CD8-positive, alpha-beta memory T cell (primary cell): ENCODE measurements at regions of chr2 and their contacts with region 1.

Region 1: DNA sequence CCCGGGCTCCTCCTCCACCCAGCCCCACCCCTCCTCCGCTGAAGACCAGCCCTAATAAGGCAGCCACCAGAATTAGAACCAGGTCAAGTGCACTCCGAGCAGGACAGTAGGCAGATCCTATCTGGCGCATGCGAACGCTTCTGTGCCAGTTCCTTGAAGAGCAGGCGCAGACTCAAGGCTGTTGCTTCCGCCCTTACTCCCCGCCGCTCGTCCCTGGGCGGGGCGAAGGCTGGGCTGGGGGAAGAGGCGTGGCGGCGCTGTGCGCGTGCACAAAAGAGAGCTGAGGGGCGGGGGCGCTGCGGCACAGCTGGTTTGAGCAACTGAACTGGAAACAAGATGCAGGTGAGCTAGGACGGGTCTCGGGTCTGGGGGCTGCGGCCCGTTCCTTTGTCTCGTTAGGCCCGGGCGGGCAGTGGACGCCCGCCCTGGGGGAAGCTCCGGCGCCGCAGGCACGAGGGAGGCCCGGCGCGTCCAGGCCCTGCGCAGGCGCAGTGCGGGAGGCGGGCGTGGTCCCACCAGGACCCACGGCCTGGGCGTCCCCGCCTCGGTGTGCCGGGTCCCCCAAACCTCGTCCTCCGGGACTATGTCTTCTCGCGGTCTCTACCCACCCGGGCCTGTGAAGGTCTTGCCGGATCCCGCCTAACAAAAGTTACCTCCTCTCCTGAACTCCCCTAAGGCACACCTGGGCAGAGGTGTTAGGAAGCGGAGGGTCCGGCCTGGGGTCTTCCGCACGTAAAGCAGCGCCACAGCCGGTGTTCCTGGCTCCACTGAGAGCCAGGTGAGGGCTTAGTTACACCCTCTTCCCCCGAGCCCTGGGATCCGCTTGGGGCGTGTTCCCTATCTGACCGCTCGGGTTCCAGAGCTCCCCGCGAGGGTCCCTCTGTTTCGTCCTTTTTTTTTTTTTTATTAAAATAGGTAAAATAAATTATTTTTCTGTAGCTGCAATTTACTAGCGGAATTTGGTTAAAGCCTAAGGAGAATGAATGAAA is at the start of gene PDCL3:
- DNase-seq: peak; percentile 91 to 98 (median 97)
- H3K4me3 ChIP-seq: peak within 1 kb of the TSS; percentile 93
- H3K4me3 Mint-ChIP-seq: peak within 1 kb of the TSS; percentile 89 to 97 (median 94)
- H3K27ac ChIP-seq: peak within 1 kb of the TSS; percentile 85
- H3K27ac Mint-ChIP-seq: peak within 1 kb of the TSS; percentile 96 to 99 (median 98)
- H3K4me1 ChIP-seq: peaks cover 22% of the 10 kb centered on the region
- H3K4me1 Mint-ChIP-seq: peaks cover 26 to 57% (median 49%) of the 10 kb centered on the region in 3 donors
- H3K27me3 ChIP-seq: no peaks in the 10 kb centered on the region
- H3K27me3 Mint-ChIP-seq: no peaks in the 10 kb centered on the region
- total RNA-seq, gene PDCL3: 46.5 to 54.1 TPM

Region 2: DNA sequence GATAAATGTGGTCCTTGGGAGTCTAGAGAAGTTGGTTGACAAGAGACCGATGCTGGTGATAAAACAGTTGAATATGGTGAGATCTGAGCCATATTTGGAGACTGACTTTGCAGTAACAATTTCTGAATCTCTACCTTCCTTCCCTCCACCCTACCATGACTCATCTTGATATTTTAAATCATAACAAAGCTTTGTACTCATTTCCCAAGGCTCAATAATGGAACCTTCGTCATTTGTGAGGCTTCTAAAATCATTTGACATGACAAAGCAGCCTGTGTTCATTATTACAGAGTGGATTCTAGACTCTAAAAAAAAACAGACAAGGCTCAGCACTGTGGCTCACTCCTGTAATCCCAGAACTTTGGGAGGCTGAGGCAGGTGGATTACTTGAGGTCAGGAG is 38.7 kb before region 1 on chr2:
- CTCF ChIA-PET with region 1: no interaction called
- POLR2A ChIA-PET with region 1: no interaction called
- DNase-seq: no peak
- H3K4me3 ChIP-seq: no peak overlapping the region
- H3K4me3 Mint-ChIP-seq: no peak overlapping the region
- H3K27ac ChIP-seq: no peak overlapping the region
- H3K27ac Mint-ChIP-seq: no peak overlapping the region
- H3K4me1 ChIP-seq: no peaks in the 10 kb centered on the region
- H3K4me1 Mint-ChIP-seq: no peaks in the 10 kb centered on the region
- H3K27me3 ChIP-seq: no peaks in the 10 kb centered on the region
- H3K27me3 Mint-ChIP-seq: peaks cover 1 to 9% of the 10 kb centered on the region in 2 donors

Region 3: GRCh38 chr2:100580367-100581276 is 17.6 kb after region 1 on chr2:
- CTCF ChIA-PET with region 1: interaction called, 19 read pairs
- POLR2A ChIA-PET with region 1: interaction called, 18 read pairs
- DNase-seq: peak; percentile 35 to 85 (median 72)
- H3K4me3 ChIP-seq: peak overlapping the region; percentile 49
- H3K4me3 Mint-ChIP-seq: peak overlapping the region; percentile 8 to 79 (median 64)
- H3K27ac ChIP-seq: peak overlapping the region; percentile 73
- H3K27ac Mint-ChIP-seq: peak overlapping the region; percentile 88 to 100 (median 96)
- H3K4me1 ChIP-seq: peaks cover 34% of the 10 kb centered on the region
- H3K4me1 Mint-ChIP-seq: peaks cover 32 to 52% (median 36%) of the 10 kb centered on the region in 3 donors
- H3K27me3 ChIP-seq: no peaks in the 10 kb centered on the region
- H3K27me3 Mint-ChIP-seq: no peaks in the 10 kb centered on the region

Region 4: GRCh38 chr2:100588071-100588786 is 25.2 kb after region 1 on chr2:
- CTCF ChIA-PET with region 1: interaction called, 6 read pairs
- POLR2A ChIA-PET with region 1: interaction called, 12 read pairs
- DNase-seq: peak in 3 of 5 donors; percentile 52 to 75 (median 67)
- H3K4me3 ChIP-seq: no peak overlapping the region
- H3K4me3 Mint-ChIP-seq: peak overlapping the region in 2 of 7 donors; percentile 13 to 50
- H3K27ac ChIP-seq: no peak overlapping the region
- H3K27ac Mint-ChIP-seq: peak overlapping the region; percentile 38 to 93 (median 56)
- H3K4me1 ChIP-seq: peaks cover 11% of the 10 kb centered on the region
- H3K4me1 Mint-ChIP-seq: peaks cover 21 to 66% (median 34%) of the 10 kb centered on the region in 3 donors
- H3K27me3 ChIP-seq: no peaks in the 10 kb centered on the region
- H3K27me3 Mint-ChIP-seq: peaks cover 0 to 2% of the 10 kb centered on the region in 2 donors

Region 5: GRCh38 chr2:101001691-101002561 is 438.9 kb after region 1 on chr2 and contains the start of gene RPL31:
- CTCF ChIA-PET with region 1: interaction called, 7 read pairs
- POLR2A ChIA-PET with region 1: interaction called, 25 read pairs
- DNase-seq: peak; percentile 93 to 98 (median 94)
- H3K4me3 ChIP-seq: peak within 1 kb of the TSS; percentile 94
- H3K4me3 Mint-ChIP-seq: peak within 1 kb of the TSS; percentile 93 to 100 (median 96)
- H3K27ac ChIP-seq: peak within 1 kb of the TSS; percentile 89
- H3K27ac Mint-ChIP-seq: peak within 1 kb of the TSS; percentile 92 to 99 (median 98)
- H3K4me1 ChIP-seq: peaks cover 27% of the 10 kb centered on the region
- H3K4me1 Mint-ChIP-seq: peaks cover 41 to 54% (median 46%) of the 10 kb centered on the region in 3 donors
- H3K27me3 ChIP-seq: no peaks in the 10 kb centered on the region
- H3K27me3 Mint-ChIP-seq: no peaks in the 10 kb centered on the region
- total RNA-seq, gene RPL31: 1,340 to 1,381 TPM